Activated CD4-positive, alpha-beta T cell treated with anti-CD3 and anti-CD28 coated beads for 36 hours (primary cell): ENCODE measurements at regions of chrX and their contacts with region 1.

Region 1: DNA sequence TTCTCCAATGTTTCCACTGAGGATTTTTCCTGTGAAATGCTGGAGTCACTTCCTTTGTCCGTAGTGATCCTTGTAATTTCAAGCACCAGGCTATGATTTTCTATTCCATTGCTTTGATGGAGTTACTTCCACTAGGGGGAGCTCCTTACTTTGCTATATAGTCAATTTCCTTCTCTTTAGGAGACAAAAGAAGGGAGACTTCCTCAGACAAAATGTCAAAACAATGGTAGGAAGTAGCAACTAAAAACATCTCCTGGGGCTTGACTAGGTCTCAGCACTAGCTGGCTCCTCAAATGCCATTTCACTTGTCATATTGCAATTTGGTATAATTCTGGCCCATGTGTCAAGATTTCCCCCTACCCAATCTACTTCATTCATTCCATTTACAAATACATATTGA is 24.1 kb downstream of the ZCCHC12 start:
- DNase-seq: no peak
- ATAC-seq: no peak
- H3K4me3 Mint-ChIP-seq: no peak overlapping the region
- H3K27ac Mint-ChIP-seq: no peak overlapping the region
- H3K4me1 Mint-ChIP-seq: no peaks in the 10 kb centered on the region
- H3K27me3 Mint-ChIP-seq: no peaks in the 10 kb centered on the region

Region 2: DNA sequence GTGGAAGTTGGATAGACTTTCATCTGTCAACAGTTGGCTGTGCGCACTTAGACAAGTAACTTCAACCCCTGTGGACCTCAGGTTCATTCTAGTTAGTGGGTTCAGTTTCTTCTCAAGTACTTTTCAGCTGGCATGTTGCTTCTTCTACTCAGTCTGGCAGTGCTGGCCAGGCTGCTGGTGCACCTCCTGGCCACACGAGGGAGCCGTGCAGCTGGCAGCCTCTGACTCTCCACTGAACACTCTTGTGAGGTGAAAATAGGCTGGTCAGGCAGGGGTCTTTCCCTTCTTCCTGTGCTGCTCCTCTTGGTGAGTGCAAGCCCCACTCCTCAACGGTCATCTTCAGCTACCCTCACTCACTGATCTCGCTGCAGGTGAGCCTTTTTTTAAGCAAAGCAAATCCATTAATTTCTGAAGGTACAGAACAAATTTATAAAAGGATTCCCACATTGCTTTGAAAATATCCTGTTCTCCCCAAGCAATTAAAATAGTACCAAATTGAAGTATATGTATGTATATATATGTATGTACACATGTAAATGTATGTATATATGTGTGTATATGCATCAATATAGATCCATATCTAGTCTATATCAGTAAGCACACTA is 157.3 kb after region 1 on chrX:
- CTCF ChIA-PET with region 1: interaction called, 16 read pairs
- POLR2A ChIA-PET with region 1: no interaction called
- intact Hi-C with region 1: loop called (anchors 1 to 5 kb)
- DNase-seq: peak; percentile 68
- ATAC-seq: peak; percentile 61
- H3K4me3 Mint-ChIP-seq: no peak overlapping the region
- H3K27ac Mint-ChIP-seq: no peak overlapping the region
- H3K4me1 Mint-ChIP-seq: no peaks in the 10 kb centered on the region
- H3K27me3 Mint-ChIP-seq: no peaks in the 10 kb centered on the region

Region 3: GRCh38 chrX:119055687-119056086 is 208.0 kb after region 1 on chrX:
- CTCF ChIA-PET with region 1: no interaction called
- POLR2A ChIA-PET with region 1: no interaction called
- intact Hi-C with region 1: no loop called
- DNase-seq: no peak
- ATAC-seq: no peak
- H3K4me3 Mint-ChIP-seq: no peak overlapping the region
- H3K27ac Mint-ChIP-seq: no peak overlapping the region
- H3K4me1 Mint-ChIP-seq: no peaks in the 10 kb centered on the region
- H3K27me3 Mint-ChIP-seq: no peaks in the 10 kb centered on the region

Region 4: GRCh38 chrX:119067023-119067739 is 219.5 kb after region 1 on chrX:
- CTCF ChIA-PET with region 1: interaction called, 13 read pairs
- POLR2A ChIA-PET with region 1: no interaction called
- intact Hi-C with region 1: loop called (anchors 1 kb)
- DNase-seq: peak; percentile 72
- ATAC-seq: peak; percentile 86
- H3K4me3 Mint-ChIP-seq: no peak overlapping the region
- H3K27ac Mint-ChIP-seq: no peak overlapping the region
- H3K4me1 Mint-ChIP-seq: no peaks in the 10 kb centered on the region
- H3K27me3 Mint-ChIP-seq: no peaks in the 10 kb centered on the region

Region 5: GRCh38 chrX:119222932-119223331 is 375.3 kb after region 1 on chrX:
- CTCF ChIA-PET with region 1: no interaction called
- POLR2A ChIA-PET with region 1: no interaction called
- intact Hi-C with region 1: loop called in 1 of 2 experiments (anchors 2 kb)
- DNase-seq: no peak
- ATAC-seq: no peak
- H3K4me3 Mint-ChIP-seq: no peak overlapping the region
- H3K27ac Mint-ChIP-seq: no peak overlapping the region
- H3K4me1 Mint-ChIP-seq: no peaks in the 10 kb centered on the region
- H3K27me3 Mint-ChIP-seq: peaks cover 11% of the 10 kb centered on the region

Region 6: GRCh38 chrX:119266364-119266995 is 418.8 kb after region 1 on chrX:
- CTCF ChIA-PET with region 1: no interaction called
- POLR2A ChIA-PET with region 1: no interaction called
- intact Hi-C with region 1: loop called (anchors 2 to 5 kb)
- DNase-seq: peak; percentile 35
- ATAC-seq: no peak
- H3K4me3 Mint-ChIP-seq: no peak overlapping the region
- H3K27ac Mint-ChIP-seq: no peak overlapping the region
- H3K4me1 Mint-ChIP-seq: no peaks in the 10 kb centered on the region
- H3K27me3 Mint-ChIP-seq: no peaks in the 10 kb centered on the region